ENCODE measurements at regions of chr12 and their contacts with region 1.

Region 1: GRCh38 chr12:3218228-3219171 is 141.3 kb downstream of the TSPAN9 start:
- DNase-seq: peak; percentile 76 to 92
- H3K4me3 ChIP-seq: peak overlapping the region in 1 of 2 donors; percentile 12
- H3K27ac ChIP-seq: peak overlapping the region; percentile 90 to 95
- H3K4me1 ChIP-seq: peaks cover 17 to 31% of the 10 kb centered on the region in 2 donors
- H3K27me3 ChIP-seq: no peaks in the 10 kb centered on the region
- CTCF ChIP-seq: no peak

Region 2: GRCh38 chr12:3150931-3151835 is 67.3 kb before region 1 on chr12:
- intact Hi-C with region 1: loop called (anchors 1 kb)
- DNase-seq: no peak
- H3K4me3 ChIP-seq: peak overlapping the region; percentile 33 to 47
- H3K27ac ChIP-seq: peak overlapping the region; percentile 85 to 89
- H3K4me1 ChIP-seq: peaks cover 24 to 49% of the 10 kb centered on the region in 2 donors
- H3K27me3 ChIP-seq: no peaks in the 10 kb centered on the region
- CTCF ChIP-seq: no peak

Region 3: GRCh38 chr12:3252450-3252891 is 34.0 kb after region 1 on chr12:
- intact Hi-C with region 1: loop called (anchors 1 kb)
- DNase-seq: peak; percentile 76 to 95
- H3K4me3 ChIP-seq: peak overlapping the region in 1 of 2 donors; percentile 26
- H3K27ac ChIP-seq: peak overlapping the region; percentile 75 to 86
- H3K4me1 ChIP-seq: peaks cover 26 to 34% of the 10 kb centered on the region in 2 donors
- H3K27me3 ChIP-seq: no peaks in the 10 kb centered on the region
- CTCF ChIP-seq: no peak

Region 4: GRCh38 chr12:3263939-3264922 is 45.7 kb after region 1 on chr12:
- intact Hi-C with region 1: no loop called
- DNase-seq: no peak
- H3K4me3 ChIP-seq: no peak overlapping the region
- H3K27ac ChIP-seq: no peak overlapping the region
- H3K4me1 ChIP-seq: peaks cover 3 to 19% of the 10 kb centered on the region in 2 donors
- H3K27me3 ChIP-seq: no peaks in the 10 kb centered on the region
- CTCF ChIP-seq: no peak

Region 5: DNA sequence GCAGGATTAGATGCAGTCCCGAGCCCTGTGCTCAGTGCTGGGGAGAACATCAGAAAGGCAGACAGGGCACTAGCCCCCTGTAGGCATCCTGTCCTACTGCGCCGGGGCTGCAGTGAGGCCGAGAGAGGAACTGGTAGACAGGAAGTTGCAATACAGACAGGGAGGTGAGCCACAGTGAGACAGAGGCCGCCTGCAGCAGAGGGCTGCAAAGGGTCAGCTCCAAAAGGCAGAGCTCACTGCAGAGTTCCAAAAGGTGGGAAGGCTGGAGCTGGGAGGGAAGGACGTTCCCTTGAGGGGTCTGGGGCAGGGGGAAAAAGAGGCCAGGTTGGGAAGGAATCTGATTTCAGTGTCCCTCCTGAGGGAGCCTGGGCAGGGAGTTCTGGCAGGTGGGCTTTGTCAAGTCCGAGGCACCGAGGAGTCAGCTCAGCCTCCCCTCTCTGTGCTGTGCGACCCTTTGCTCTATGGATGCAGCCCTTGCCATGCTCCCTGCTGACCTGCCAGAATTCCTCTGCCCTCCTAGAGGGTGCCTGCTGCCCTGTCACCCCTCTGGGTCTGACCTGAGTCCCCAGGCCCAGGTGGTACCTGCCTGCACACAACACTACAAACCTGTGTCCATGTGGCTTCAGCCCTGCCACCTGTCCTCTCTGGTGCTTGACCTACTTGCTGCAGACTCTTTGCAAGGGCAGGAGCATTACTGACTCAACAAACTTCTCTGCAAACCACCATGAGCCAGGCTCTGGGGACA is 336.0 kb after region 1 on chr12:
- intact Hi-C with region 1: no loop called
- DNase-seq: no peak
- H3K4me3 ChIP-seq: no peak overlapping the region
- H3K27ac ChIP-seq: no peak overlapping the region
- H3K4me1 ChIP-seq: no peaks in the 10 kb centered on the region
- H3K27me3 ChIP-seq: no peaks in the 10 kb centered on the region
- CTCF ChIP-seq: no peak

Measured in ascending aorta (tissue), 2 donors.